ENCODE measurements at regions of chr17 and their contacts with region 1.

Region 1: GRCh38 chr17:8954339-8954738 is 11.2 kb downstream of the PIK3R5 start:
- DNase-seq: peak; percentile 97 to 99 (median 99)
- H3K4me3 ChIP-seq: peak overlapping the region; percentile 13 to 57 (median 17)
- H3K4me3 Mint-ChIP-seq: peak overlapping the region; percentile 73 to 83
- H3K27ac ChIP-seq: peak overlapping the region; percentile 97 to 100
- H3K27ac Mint-ChIP-seq: peak overlapping the region; percentile 97 to 100 (median 100)
- H3K4me1 ChIP-seq: peaks cover 68 to 91% of the 10 kb centered on the region in 2 donors
- H3K4me1 Mint-ChIP-seq: peaks cover 92% of the 10 kb centered on the region
- H3K27me3 ChIP-seq: no peaks in the 10 kb centered on the region
- H3K27me3 Mint-ChIP-seq: peaks cover 0 to 1% (median 0%) of the 10 kb centered on the region in 3 donors
- CTCF ChIP-seq: no peak

Region 2: GRCh38 chr17:8922451-8922850 is 31.9 kb before region 1 on chr17:
- intact Hi-C with region 1: loop called in 1 of 2 experiments (anchors 2 kb)
- DNase-seq: peak; percentile 97 to 99 (median 99)
- H3K4me3 ChIP-seq: peak overlapping the region in 1 of 3 experiments; percentile 7
- H3K4me3 Mint-ChIP-seq: peak overlapping the region in 1 of 2 donors; percentile 85
- H3K27ac ChIP-seq: peak overlapping the region; percentile 91 to 99
- H3K27ac Mint-ChIP-seq: peak overlapping the region in 4 of 7 donors; percentile 99 to 100 (median 99)
- H3K4me1 ChIP-seq: peaks cover 32 to 59% of the 10 kb centered on the region in 2 donors
- H3K4me1 Mint-ChIP-seq: peaks cover 36% of the 10 kb centered on the region
- H3K27me3 ChIP-seq: no peaks in the 10 kb centered on the region
- H3K27me3 Mint-ChIP-seq: no peaks in the 10 kb centered on the region
- CTCF ChIP-seq: no peak

Region 3: DNA sequence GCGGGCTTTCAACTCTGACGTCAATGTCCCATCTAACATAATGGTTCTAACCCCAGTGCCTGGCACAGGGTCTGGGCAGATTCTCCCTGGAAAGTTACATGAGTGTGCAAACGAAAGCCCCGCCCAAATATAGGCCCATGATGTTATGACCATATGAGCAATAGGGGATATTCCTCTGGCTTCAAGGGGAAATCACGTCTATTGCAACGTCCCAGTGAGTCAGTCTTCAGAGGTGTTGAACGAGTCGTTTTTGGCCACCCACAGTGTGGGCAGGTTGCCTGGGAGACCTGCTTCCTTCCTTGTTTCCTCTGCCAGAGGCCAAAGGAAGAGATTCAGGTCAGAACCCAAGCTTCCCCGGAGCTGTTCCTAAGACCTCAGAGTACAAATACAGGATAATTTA is 19.1 kb before region 1 on chr17:
- intact Hi-C with region 1: loop called in 1 of 2 experiments (anchors 1 kb)
- DNase-seq: peak; percentile 97 to 100 (median 100)
- H3K4me3 ChIP-seq: no peak overlapping the region
- H3K4me3 Mint-ChIP-seq: peak overlapping the region in 1 of 2 donors; percentile 14
- H3K27ac ChIP-seq: peak overlapping the region; percentile 83 to 96
- H3K27ac Mint-ChIP-seq: peak overlapping the region; percentile 94 to 99 (median 98)
- H3K4me1 ChIP-seq: peaks cover 19 to 28% of the 10 kb centered on the region in 2 donors
- H3K4me1 Mint-ChIP-seq: peaks cover 48% of the 10 kb centered on the region
- H3K27me3 ChIP-seq: no peaks in the 10 kb centered on the region
- H3K27me3 Mint-ChIP-seq: no peaks in the 10 kb centered on the region
- CTCF ChIP-seq: no peak